CD8-positive, alpha-beta memory T cell (primary cell): ENCODE measurements at regions of chr15 and their contacts with region 1.

Region 1: DNA sequence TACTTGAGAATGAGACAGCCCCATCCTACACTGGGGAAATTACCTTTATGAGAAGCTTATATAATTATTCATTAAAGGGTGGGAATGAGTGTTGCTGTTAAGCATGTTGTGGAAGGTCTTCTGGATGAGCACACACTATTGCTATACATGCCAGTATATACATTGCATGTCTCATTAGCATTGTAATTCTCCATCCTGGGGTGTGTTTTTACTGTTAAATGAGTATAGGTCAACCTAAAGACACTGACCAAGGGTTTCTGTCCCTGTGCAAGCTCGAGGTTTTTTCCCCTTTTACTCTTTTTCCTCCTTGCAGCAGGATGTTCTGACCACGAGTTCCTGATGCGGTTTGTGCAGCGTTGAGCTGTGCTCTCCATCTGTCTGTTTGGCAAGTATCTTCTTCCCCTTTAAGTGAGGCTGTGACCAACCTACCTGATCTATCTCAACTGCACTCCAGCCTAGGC is 7.2 kb upstream of the IVD start:
- DNase-seq: no peak
- H3K4me3 ChIP-seq: no peak overlapping the region
- H3K4me3 Mint-ChIP-seq: peak overlapping the region in 6 of 7 donors; percentile 36 to 70 (median 66)
- H3K27ac ChIP-seq: no peak overlapping the region
- H3K27ac Mint-ChIP-seq: peak overlapping the region in 6 of 8 donors; percentile 42 to 80 (median 68)
- H3K4me1 ChIP-seq: peaks cover 11% of the 10 kb centered on the region
- H3K4me1 Mint-ChIP-seq: peaks cover 14 to 25% (median 20%) of the 10 kb centered on the region in 3 donors
- H3K27me3 ChIP-seq: no peaks in the 10 kb centered on the region
- H3K27me3 Mint-ChIP-seq: no peaks in the 10 kb centered on the region

Region 2: GRCh38 chr15:40421246-40422157 is 23.1 kb after region 1 on chr15:
- CTCF ChIA-PET with region 1: interaction called, 10 read pairs
- POLR2A ChIA-PET with region 1: no interaction called
- DNase-seq: peak; percentile 66 to 83 (median 70)
- H3K4me3 ChIP-seq: no peak overlapping the region
- H3K4me3 Mint-ChIP-seq: peak overlapping the region in 2 of 7 donors; percentile 5 to 16
- H3K27ac ChIP-seq: no peak overlapping the region
- H3K27ac Mint-ChIP-seq: peak overlapping the region in 3 of 8 donors; percentile 29 to 68 (median 58)
- H3K4me1 ChIP-seq: peaks cover 4% of the 10 kb centered on the region
- H3K4me1 Mint-ChIP-seq: peaks cover 6 to 10% (median 6%) of the 10 kb centered on the region in 3 donors
- H3K27me3 ChIP-seq: no peaks in the 10 kb centered on the region
- H3K27me3 Mint-ChIP-seq: no peaks in the 10 kb centered on the region

Region 3: DNA sequence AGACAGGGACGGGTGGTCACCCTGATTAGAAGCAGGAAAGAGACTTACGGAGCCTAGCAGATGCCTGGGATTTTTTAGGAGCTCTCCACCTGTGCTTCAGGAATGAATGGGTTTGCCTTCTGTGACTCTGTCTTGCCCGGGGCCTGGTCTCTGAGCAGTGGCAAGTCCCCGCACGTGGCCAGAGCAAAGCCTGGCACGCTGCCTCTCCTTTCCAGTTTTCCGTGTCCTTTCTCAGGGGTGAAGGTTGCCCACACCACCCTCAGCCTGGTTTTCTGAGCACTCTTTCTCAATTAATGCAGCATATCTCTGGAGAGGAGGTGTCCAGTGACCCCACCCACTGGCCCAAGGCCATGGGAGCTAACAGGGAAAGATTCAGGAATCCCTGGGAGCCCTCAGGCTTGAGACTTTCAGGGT is 57.9 kb after region 1 on chr15:
- CTCF ChIA-PET with region 1: no interaction called
- POLR2A ChIA-PET with region 1: no interaction called
- DNase-seq: no peak
- H3K4me3 ChIP-seq: no peak overlapping the region
- H3K4me3 Mint-ChIP-seq: no peak overlapping the region
- H3K27ac ChIP-seq: no peak overlapping the region
- H3K27ac Mint-ChIP-seq: peak overlapping the region in 4 of 8 donors; percentile 15 to 61 (median 50)
- H3K4me1 ChIP-seq: peaks cover 62% of the 10 kb centered on the region
- H3K4me1 Mint-ChIP-seq: peaks cover 53 to 72% (median 54%) of the 10 kb centered on the region in 3 donors
- H3K27me3 ChIP-seq: no peaks in the 10 kb centered on the region
- H3K27me3 Mint-ChIP-seq: no peaks in the 10 kb centered on the region